Activated CD4-positive, alpha-beta memory T cell treated with anti-CD3 and anti-CD28 coated beads for 36 hours (primary cell): ENCODE measurements at regions of chr14 and their contacts with region 1.

Region 1: DNA sequence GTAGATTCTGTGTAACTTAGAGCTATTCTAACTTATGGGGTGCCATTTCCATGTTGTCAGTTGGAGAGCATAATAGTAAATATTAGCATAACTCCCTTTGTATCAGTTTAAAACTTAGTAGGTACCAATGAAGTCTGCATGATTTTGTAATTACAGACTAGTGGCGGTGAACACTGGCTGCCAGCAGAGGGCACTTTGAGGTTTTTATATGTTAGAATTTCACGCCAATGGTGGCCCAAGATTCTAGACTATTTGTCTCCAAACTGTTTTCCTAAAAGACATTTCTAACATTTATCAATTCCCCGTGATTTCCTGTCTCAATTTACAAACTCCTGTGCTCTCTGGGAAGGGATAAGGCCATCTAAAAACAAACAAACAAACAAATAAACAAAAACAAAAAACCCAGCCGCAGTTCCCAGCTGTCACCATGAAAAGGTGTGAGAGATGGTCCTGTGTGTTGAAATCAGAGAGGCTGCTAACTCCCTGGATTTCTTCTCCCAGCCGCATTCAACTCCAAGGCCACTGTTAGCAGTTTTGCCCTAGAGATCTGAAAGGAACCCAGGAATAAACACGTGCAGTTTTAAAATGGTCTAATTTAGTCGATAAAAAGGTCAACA is 57.6 kb downstream of the BRMS1L start:
- DNase-seq: peak; percentile 28
- H3K4me3 Mint-ChIP-seq: no peak overlapping the region
- H3K27ac Mint-ChIP-seq: no peak overlapping the region
- H3K4me1 Mint-ChIP-seq: no peaks in the 10 kb centered on the region
- H3K27me3 Mint-ChIP-seq: no peaks in the 10 kb centered on the region

Region 2: GRCh38 chr14:35897616-35898111 is 13.9 kb after region 1 on chr14:
- CTCF ChIA-PET with region 1: no interaction called
- POLR2A ChIA-PET with region 1: no interaction called
- intact Hi-C with region 1: no loop called
- DNase-seq: no peak
- H3K4me3 Mint-ChIP-seq: no peak overlapping the region
- H3K27ac Mint-ChIP-seq: no peak overlapping the region
- H3K4me1 Mint-ChIP-seq: no peaks in the 10 kb centered on the region
- H3K27me3 Mint-ChIP-seq: peaks cover 2% of the 10 kb centered on the region

Region 3: GRCh38 chr14:35944847-35945246 is 61.1 kb after region 1 on chr14:
- CTCF ChIA-PET with region 1: interaction called, 6 read pairs
- POLR2A ChIA-PET with region 1: no interaction called
- intact Hi-C with region 1: loop called (anchors 2 kb)
- DNase-seq: peak; percentile 30
- H3K4me3 Mint-ChIP-seq: no peak overlapping the region
- H3K27ac Mint-ChIP-seq: no peak overlapping the region
- H3K4me1 Mint-ChIP-seq: peaks cover 3% of the 10 kb centered on the region
- H3K27me3 Mint-ChIP-seq: peaks cover 3% of the 10 kb centered on the region

Region 4: DNA sequence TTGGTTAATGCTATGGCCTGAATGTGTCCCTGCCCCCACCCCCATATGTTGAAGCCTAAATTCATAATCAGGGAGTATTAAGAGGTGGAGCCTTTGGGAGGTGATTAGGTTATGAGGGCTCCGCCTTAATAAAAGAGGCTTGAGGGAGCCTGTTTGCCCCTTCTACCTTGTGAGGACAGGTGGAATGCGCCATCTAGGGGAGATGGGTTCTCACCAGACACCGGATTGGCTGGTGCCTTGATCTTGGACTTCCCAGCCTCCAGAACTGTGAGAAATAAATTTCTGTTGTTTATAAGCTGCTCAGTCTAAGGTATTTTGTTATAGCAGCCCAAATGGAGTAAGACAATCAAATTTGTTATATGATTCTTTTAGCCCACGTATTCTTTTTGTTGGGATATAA is 144.4 kb after region 1 on chr14:
- CTCF ChIA-PET with region 1: interaction called, 4 read pairs
- POLR2A ChIA-PET with region 1: no interaction called
- intact Hi-C with region 1: loop called (anchors 1 kb)
- DNase-seq: peak; percentile 15
- H3K4me3 Mint-ChIP-seq: no peak overlapping the region
- H3K27ac Mint-ChIP-seq: no peak overlapping the region
- H3K4me1 Mint-ChIP-seq: no peaks in the 10 kb centered on the region
- H3K27me3 Mint-ChIP-seq: no peaks in the 10 kb centered on the region

Region 5: DNA sequence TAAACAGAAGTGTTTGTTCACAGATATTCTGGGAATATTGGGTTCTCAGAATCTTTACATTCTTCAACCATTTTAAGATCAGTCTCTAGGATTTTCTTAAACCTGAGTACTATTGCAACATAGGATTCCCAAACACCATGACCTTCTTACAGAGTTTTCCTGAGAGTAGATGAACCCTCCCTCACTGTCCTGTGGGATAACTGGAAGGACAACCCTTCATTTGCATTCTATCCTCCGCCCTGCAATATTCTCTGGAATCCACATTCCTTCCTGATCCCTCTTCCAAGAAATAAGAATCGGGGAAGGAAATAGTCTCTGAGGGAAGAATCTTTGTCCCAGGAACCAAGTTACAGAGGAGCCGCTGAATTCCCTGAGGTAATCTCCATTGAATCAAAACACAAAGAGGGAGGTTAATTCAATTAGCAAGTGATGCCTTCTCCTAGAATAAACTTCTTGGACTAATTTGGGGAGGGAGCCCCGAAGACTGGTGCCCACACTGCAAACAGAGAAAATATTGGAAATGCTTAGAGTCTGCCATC is 536.4 kb after region 1 on chr14:
- CTCF ChIA-PET with region 1: no interaction called
- POLR2A ChIA-PET with region 1: no interaction called
- intact Hi-C with region 1: no loop called
- DNase-seq: no peak
- H3K4me3 Mint-ChIP-seq: no peak overlapping the region
- H3K27ac Mint-ChIP-seq: no peak overlapping the region
- H3K4me1 Mint-ChIP-seq: no peaks in the 10 kb centered on the region
- H3K27me3 Mint-ChIP-seq: peaks cover 2% of the 10 kb centered on the region